CD4-positive, alpha-beta T cell (primary cell): ENCODE measurements at regions of chr14 and their contacts with region 1.

Region 1: DNA sequence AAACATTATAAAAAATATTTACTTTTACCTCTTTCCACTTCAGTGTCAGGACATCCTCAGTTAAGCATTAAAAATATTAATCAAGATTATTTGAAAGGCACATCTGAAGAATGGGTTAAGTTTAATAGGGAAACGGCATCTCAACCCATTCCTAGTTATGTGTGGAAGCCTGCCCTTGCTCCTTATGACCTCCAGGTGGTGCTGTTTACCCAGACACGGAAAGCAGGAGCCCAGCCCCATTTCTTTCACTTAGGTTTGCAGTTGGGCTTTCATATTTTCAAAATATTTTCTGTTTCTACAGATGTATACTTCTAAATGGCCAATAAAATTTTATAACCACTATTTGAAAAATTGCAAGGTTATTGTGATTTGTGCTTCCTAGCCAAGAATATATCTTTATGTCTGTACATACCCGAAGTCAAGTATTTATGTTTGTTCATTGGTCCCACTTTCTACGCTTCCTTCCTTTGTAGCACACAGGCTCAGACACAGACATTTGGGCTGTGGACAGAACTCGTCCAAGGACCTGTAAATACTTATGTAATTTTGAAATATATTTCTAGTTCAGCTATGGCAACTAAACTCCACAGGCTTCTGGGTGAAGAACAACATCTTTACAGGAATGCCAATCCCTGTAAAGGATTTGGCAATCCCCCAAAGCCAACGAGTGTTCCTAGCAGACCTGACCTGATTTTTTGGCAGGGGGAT is 247.1 kb downstream of the AKAP6 start:
- DNase-seq: peak in 11 of 14 experiments; percentile 0 to 72 (median 7)
- ATAC-seq: peak; percentile 41
- H3K4me3 ChIP-seq: no peak overlapping the region
- H3K4me3 Mint-ChIP-seq: no peak overlapping the region
- H3K27ac ChIP-seq: no peak overlapping the region
- H3K27ac Mint-ChIP-seq: no peak overlapping the region
- H3K4me1 ChIP-seq: no peaks in the 10 kb centered on the region
- H3K4me1 Mint-ChIP-seq: no peaks in the 10 kb centered on the region
- H3K27me3 ChIP-seq: no peaks in the 10 kb centered on the region
- H3K27me3 Mint-ChIP-seq: peaks cover 14% of the 10 kb centered on the region
- CTCF ChIP-seq: peak; percentile 82

Region 2: GRCh38 chr14:32786886-32787285 is 210.6 kb after region 1 on chr14:
- CTCF ChIA-PET with region 1: no interaction called
- POLR2A ChIA-PET with region 1: no interaction called
- intact Hi-C with region 1: no loop called
- DNase-seq: no peak
- ATAC-seq: no peak
- H3K4me3 ChIP-seq: no peak overlapping the region
- H3K4me3 Mint-ChIP-seq: no peak overlapping the region
- H3K27ac ChIP-seq: no peak overlapping the region
- H3K27ac Mint-ChIP-seq: no peak overlapping the region
- H3K4me1 ChIP-seq: no peaks in the 10 kb centered on the region
- H3K4me1 Mint-ChIP-seq: no peaks in the 10 kb centered on the region
- H3K27me3 ChIP-seq: no peaks in the 10 kb centered on the region
- H3K27me3 Mint-ChIP-seq: no peaks in the 10 kb centered on the region
- CTCF ChIP-seq: no peak

Region 3: GRCh38 chr14:33432407-33433023 is 856.3 kb after region 1 on chr14:
- CTCF ChIA-PET with region 1: no interaction called
- POLR2A ChIA-PET with region 1: no interaction called
- intact Hi-C with region 1: loop called in 1 of 2 experiments (anchors 5 kb)
- DNase-seq: no peak
- ATAC-seq: no peak
- H3K4me3 ChIP-seq: no peak overlapping the region
- H3K4me3 Mint-ChIP-seq: no peak overlapping the region
- H3K27ac ChIP-seq: no peak overlapping the region
- H3K27ac Mint-ChIP-seq: no peak overlapping the region
- H3K4me1 ChIP-seq: no peaks in the 10 kb centered on the region
- H3K4me1 Mint-ChIP-seq: peaks cover 12% of the 10 kb centered on the region
- H3K27me3 ChIP-seq: no peaks in the 10 kb centered on the region
- H3K27me3 Mint-ChIP-seq: no peaks in the 10 kb centered on the region
- CTCF ChIP-seq: no peak

Region 4: DNA sequence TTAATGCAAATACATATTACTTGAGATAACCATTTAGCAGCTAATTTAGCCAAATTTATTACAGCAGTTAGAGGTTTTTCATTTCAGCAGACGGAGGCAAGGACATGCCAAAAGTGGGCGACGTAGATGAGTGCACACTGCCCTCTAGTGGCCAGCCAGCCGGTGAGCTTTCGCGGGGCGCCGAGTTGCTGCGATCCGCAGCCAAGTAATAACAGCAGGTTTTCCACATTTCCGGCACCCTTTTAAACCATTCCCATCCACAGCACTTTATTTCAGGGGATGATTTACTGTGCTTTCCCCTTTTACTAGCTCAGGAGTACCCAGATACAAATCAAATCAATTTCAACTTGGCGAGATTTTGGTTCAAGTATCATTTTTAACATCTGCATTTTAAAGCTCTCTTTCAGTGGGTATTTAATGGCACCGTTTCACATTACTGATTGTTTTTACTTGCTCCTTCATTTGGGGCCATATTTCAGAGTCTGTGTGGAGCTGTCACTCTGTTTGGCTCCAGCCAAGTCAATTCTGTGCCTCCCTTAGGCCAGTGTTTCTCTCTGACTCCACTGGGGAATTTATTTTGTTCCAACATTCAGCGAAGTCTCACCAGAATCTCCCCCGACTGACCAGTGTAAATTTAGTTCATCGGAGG is 1216.6 kb after region 1 on chr14:
- CTCF ChIA-PET with region 1: no interaction called
- POLR2A ChIA-PET with region 1: no interaction called
- intact Hi-C with region 1: loop called (anchors 1 to 2 kb)
- DNase-seq: peak; percentile 36 to 74 (median 54)
- ATAC-seq: no peak
- H3K4me3 ChIP-seq: no peak overlapping the region
- H3K4me3 Mint-ChIP-seq: peak overlapping the region; percentile 60
- H3K27ac ChIP-seq: no peak overlapping the region
- H3K27ac Mint-ChIP-seq: no peak overlapping the region
- H3K4me1 ChIP-seq: peaks cover 6% of the 10 kb centered on the region
- H3K4me1 Mint-ChIP-seq: peaks cover 20% of the 10 kb centered on the region
- H3K27me3 ChIP-seq: peaks cover 5 to 7% of the 10 kb centered on the region in 2 experiments
- H3K27me3 Mint-ChIP-seq: peaks cover 60% of the 10 kb centered on the region
- CTCF ChIP-seq: peak; percentile 92

Region 5: GRCh38 chr14:34227834-34228649 is 1651.8 kb after region 1 on chr14:
- CTCF ChIA-PET with region 1: no interaction called
- POLR2A ChIA-PET with region 1: no interaction called
- intact Hi-C with region 1: loop called (anchors 5 kb)
- DNase-seq: peak; percentile 19 to 67 (median 42)
- ATAC-seq: peak; percentile 49
- H3K4me3 ChIP-seq: no peak overlapping the region
- H3K4me3 Mint-ChIP-seq: no peak overlapping the region
- H3K27ac ChIP-seq: no peak overlapping the region
- H3K27ac Mint-ChIP-seq: no peak overlapping the region
- H3K4me1 ChIP-seq: peaks cover 3% of the 10 kb centered on the region
- H3K4me1 Mint-ChIP-seq: no peaks in the 10 kb centered on the region
- H3K27me3 ChIP-seq: no peaks in the 10 kb centered on the region
- H3K27me3 Mint-ChIP-seq: no peaks in the 10 kb centered on the region
- CTCF ChIP-seq: peak; percentile 65

Region 6: GRCh38 chr14:34300882-34301734 is 1724.9 kb after region 1 on chr14:
- CTCF ChIA-PET with region 1: no interaction called
- POLR2A ChIA-PET with region 1: no interaction called
- intact Hi-C with region 1: loop called in 1 of 2 experiments (anchors 2 kb)
- DNase-seq: peak in 3 of 14 experiments; percentile 36 to 48 (median 45)
- ATAC-seq: no peak
- H3K4me3 ChIP-seq: no peak overlapping the region
- H3K4me3 Mint-ChIP-seq: no peak overlapping the region
- H3K27ac ChIP-seq: no peak overlapping the region
- H3K27ac Mint-ChIP-seq: no peak overlapping the region
- H3K4me1 ChIP-seq: no peaks in the 10 kb centered on the region
- H3K4me1 Mint-ChIP-seq: no peaks in the 10 kb centered on the region
- H3K27me3 ChIP-seq: no peaks in the 10 kb centered on the region
- H3K27me3 Mint-ChIP-seq: peaks cover 11% of the 10 kb centered on the region
- CTCF ChIP-seq: peak; percentile 32

Region 7: DNA sequence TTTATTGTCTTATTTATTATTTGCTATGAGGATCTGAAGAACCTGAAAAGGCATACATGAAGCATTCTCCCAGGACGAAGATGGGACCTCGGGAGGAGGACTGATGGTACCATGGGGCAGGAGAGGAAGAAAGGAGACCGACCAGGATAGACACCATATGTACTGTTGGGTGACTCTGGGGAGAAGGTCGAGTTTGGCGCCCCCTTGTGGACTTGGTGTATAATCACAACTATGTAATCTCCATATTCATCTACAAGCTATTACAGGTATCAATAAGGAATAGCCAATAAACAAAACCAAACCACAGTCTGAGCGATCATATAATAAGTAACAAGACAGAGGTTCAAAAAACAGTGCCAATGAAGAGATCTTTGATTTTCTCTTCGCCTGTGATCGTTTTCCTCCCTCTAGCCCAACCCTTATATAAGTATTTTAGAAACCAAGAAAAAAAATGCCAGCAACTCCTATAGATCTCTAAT is 1746.7 kb after region 1 on chr14:
- CTCF ChIA-PET with region 1: no interaction called
- POLR2A ChIA-PET with region 1: no interaction called
- intact Hi-C with region 1: loop called (anchors 1 to 2 kb)
- DNase-seq: peak; percentile 42 to 82 (median 64)
- ATAC-seq: peak; percentile 73
- H3K4me3 ChIP-seq: no peak overlapping the region
- H3K4me3 Mint-ChIP-seq: no peak overlapping the region
- H3K27ac ChIP-seq: no peak overlapping the region
- H3K27ac Mint-ChIP-seq: no peak overlapping the region
- H3K4me1 ChIP-seq: peaks cover 3% of the 10 kb centered on the region
- H3K4me1 Mint-ChIP-seq: no peaks in the 10 kb centered on the region
- H3K27me3 ChIP-seq: no peaks in the 10 kb centered on the region
- H3K27me3 Mint-ChIP-seq: peaks cover 6% of the 10 kb centered on the region
- CTCF ChIP-seq: peak; percentile 87